GM12878 (cell line): ENCODE measurements at regions of chr4 and their contacts with region 1.

Region 1: DNA sequence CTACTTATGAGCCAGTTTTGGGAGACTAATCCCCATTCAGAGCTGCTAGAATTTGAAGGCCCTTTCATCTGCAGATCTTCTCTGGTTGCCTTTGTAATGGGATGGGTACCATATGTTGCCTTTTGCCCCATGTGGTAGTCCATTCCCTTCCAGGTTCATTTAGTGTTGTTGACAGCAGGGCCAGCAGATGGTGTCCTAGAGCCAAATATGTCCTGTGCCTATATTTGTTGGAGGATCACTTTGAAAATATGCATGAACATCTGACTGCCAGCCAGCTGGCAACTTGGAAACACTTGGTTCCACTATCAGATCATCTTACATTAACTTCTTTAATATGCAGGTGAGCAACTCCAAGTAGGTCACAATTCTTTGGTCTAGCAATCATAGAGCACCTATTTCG is 30.4 kb downstream of the CFAP299 start:
- DNase-seq: peak; percentile 26
- ATAC-seq: peak; percentile 91
- H3K4me3 ChIP-seq: no peak overlapping the region
- H3K27ac ChIP-seq: no peak overlapping the region
- H3K4me1 ChIP-seq: no peaks in the 10 kb centered on the region
- H3K27me3 ChIP-seq: no peaks in the 10 kb centered on the region
- CTCF ChIP-seq: peak; percentile 62 to 73 (median 67)
- EP300 ChIP-seq: no peak
- POLR2A ChIP-seq: no peak
- RAD21 ChIP-seq: peak; percentile 85

Region 2: DNA sequence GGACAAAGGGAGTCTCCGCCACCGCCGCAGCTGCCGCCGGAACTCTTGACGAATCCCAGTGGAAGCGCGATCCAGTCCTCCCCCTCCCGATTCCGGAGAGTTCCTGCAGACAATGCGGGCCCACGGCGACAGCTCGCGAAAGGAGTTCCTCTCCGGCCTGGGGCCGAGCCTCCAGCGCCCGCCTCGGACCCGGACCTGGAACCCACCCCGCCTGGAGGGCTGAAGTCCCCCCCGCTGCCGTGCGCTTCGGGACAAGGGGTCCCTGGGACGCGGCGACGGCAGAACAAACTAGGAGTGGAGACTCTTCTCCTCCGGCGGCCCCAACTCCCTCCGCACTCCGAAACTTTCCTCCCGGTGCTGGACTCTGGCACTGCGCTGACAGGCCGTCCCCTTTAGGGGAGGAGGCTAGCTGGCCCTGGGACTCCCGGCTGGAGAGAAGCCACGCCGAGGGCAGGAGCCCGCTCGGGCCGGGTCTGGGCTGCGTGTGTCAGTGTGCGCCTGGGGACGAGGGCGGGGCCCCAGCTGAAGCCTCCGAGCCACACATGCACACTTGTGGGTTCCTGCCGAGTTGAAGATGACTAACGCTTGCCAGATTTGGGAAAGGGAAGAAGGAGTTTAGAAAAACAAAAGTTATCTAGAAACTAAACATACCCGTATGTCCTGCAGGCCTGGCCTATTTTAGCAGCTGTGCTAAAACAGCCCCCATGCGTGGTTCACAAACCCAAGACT is 293.0 kb before region 1 on chr4 and contains the start of gene ANTXR2:
- CTCF ChIA-PET with region 1: no interaction called
- POLR2A ChIA-PET with region 1: no interaction called
- RAD21 ChIA-PET with region 1: no interaction called
- SMC1A ChIA-PET with region 1: no interaction called
- in situ Hi-C with region 1: no loop called
- intact Hi-C with region 1: no loop called
- DNase-seq: peak; percentile 41
- ATAC-seq: peak; percentile 81
- H3K4me3 ChIP-seq: peak within 1 kb of the TSS; percentile 95
- H3K27ac ChIP-seq: peak within 1 kb of the TSS; percentile 70
- H3K4me1 ChIP-seq: peaks cover 48% of the 10 kb centered on the region
- H3K27me3 ChIP-seq: no peaks in the 10 kb centered on the region
- CTCF ChIP-seq: no peak
- EP300 ChIP-seq: 0 out of 4 replicates have a peak, but pooled peaks of 1 of the 2 experiments have one; percentile 7
- POLR2A ChIP-seq: peak; percentile 69
- RAD21 ChIP-seq: no peak
- polyA plus RNA-seq, gene ANTXR2: 1.4 to 1.5 TPM

Region 3: GRCh38 chr4:80221161-80221560 is 144.8 kb before region 1 on chr4:
- CTCF ChIA-PET with region 1: interaction called, 6 read pairs
- POLR2A ChIA-PET with region 1: no interaction called
- RAD21 ChIA-PET with region 1: interaction called, 5 read pairs
- SMC1A ChIA-PET with region 1: interaction called, 13 read pairs
- in situ Hi-C with region 1: no loop called
- intact Hi-C with region 1: loop called (anchors 1 kb)
- DNase-seq: no peak
- ATAC-seq: peak; percentile 55
- H3K4me3 ChIP-seq: no peak overlapping the region
- H3K27ac ChIP-seq: no peak overlapping the region
- H3K4me1 ChIP-seq: no peaks in the 10 kb centered on the region
- H3K27me3 ChIP-seq: peaks cover 0 to 8% of the 10 kb centered on the region in 2 experiments; a peak in 2 of 4 replicates
- CTCF ChIP-seq: peak in 2 of 3 experiments; percentile 14 to 25; a peak in 4 of 6 replicates
- EP300 ChIP-seq: no peak
- POLR2A ChIP-seq: no peak
- RAD21 ChIP-seq: peak; percentile 52

Region 4: DNA sequence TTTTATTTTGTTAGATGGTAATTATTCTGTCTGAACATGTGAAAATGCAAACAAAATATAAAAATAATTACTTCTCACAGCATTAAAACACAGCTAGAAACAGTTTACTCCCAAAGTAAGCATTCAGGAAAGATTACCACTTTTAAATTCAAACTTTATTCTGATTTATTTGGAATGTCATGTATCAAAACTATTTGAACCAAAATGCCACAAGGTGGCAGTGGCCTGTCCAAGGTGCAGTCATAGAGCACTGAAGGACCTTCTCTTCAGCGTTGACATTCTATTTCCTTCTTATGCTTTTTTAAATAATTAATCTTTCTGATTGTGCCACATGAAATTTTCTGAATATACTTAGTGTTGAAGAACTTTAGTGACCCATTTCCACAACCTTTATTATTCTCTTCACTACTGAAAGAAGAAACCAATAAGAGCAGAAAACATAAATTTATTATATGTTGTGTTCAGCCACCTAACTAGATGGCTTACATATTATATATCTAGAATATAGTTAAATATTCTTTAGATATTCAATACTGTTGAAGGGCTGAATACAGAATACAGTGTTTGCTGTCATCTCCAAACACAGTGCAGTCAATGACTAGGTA is 253.2 kb after region 1 on chr4:
- CTCF ChIA-PET with region 1: interaction called, 3 read pairs
- POLR2A ChIA-PET with region 1: no interaction called
- RAD21 ChIA-PET with region 1: interaction called, 4 read pairs
- SMC1A ChIA-PET with region 1: no interaction called
- in situ Hi-C with region 1: no loop called
- intact Hi-C with region 1: loop called (anchors 2 kb)
- DNase-seq: no peak
- ATAC-seq: peak; percentile 48; the same call in 2 of the 3 replicates
- H3K4me3 ChIP-seq: no peak overlapping the region
- H3K27ac ChIP-seq: no peak overlapping the region
- H3K4me1 ChIP-seq: no peaks in the 10 kb centered on the region
- H3K27me3 ChIP-seq: no peaks in the 10 kb centered on the region
- CTCF ChIP-seq: peak in 2 of 3 experiments; percentile 14 to 42; a peak in 3 of 6 replicates
- EP300 ChIP-seq: no peak
- POLR2A ChIP-seq: no peak
- RAD21 ChIP-seq: peak; percentile 52

Region 5: GRCh38 chr4:80989921-80990544 is 624.1 kb after region 1 on chr4:
- CTCF ChIA-PET with region 1: interaction called, 26 read pairs
- POLR2A ChIA-PET with region 1: no interaction called
- RAD21 ChIA-PET with region 1: interaction called, 7 read pairs
- SMC1A ChIA-PET with region 1: interaction called, 11 read pairs
- in situ Hi-C with region 1: no loop called
- intact Hi-C with region 1: loop called (anchors 1 kb)
- DNase-seq: peak; percentile 26
- ATAC-seq: peak; percentile 85
- H3K4me3 ChIP-seq: no peak overlapping the region
- H3K27ac ChIP-seq: no peak overlapping the region
- H3K4me1 ChIP-seq: no peaks in the 10 kb centered on the region
- H3K27me3 ChIP-seq: no peaks in the 10 kb centered on the region
- CTCF ChIP-seq: peak; percentile 58 to 68 (median 61)
- EP300 ChIP-seq: no peak
- POLR2A ChIP-seq: no peak
- RAD21 ChIP-seq: peak; percentile 80

Region 6: GRCh38 chr4:81040012-81040659 is 674.2 kb after region 1 on chr4:
- CTCF ChIA-PET with region 1: interaction called, 268 read pairs
- POLR2A ChIA-PET with region 1: interaction called, 3 read pairs
- RAD21 ChIA-PET with region 1: interaction called, 78 read pairs
- SMC1A ChIA-PET with region 1: interaction called, 56 read pairs
- in situ Hi-C with region 1: loop called (anchors 5 kb)
- intact Hi-C with region 1: loop called (anchors 1 kb)
- DNase-seq: no peak
- ATAC-seq: peak; percentile 82
- H3K4me3 ChIP-seq: no peak overlapping the region
- H3K27ac ChIP-seq: no peak overlapping the region
- H3K4me1 ChIP-seq: 0 out of 2 replicates have a peak, but pooled peaks cover 3% of the 10 kb centered on the region
- H3K27me3 ChIP-seq: no peaks in the 10 kb centered on the region
- CTCF ChIP-seq: peak; percentile 59 to 81 (median 68); a peak in 5 of 6 replicates
- EP300 ChIP-seq: no peak
- POLR2A ChIP-seq: no peak
- RAD21 ChIP-seq: peak; percentile 92

Region 7: GRCh38 chr4:81069706-81070331 is 703.9 kb after region 1 on chr4:
- CTCF ChIA-PET with region 1: interaction called, 34 read pairs
- POLR2A ChIA-PET with region 1: no interaction called
- RAD21 ChIA-PET with region 1: interaction called, 17 read pairs
- SMC1A ChIA-PET with region 1: interaction called, 10 read pairs
- in situ Hi-C with region 1: no loop called
- intact Hi-C with region 1: loop called (anchors 1 kb)
- DNase-seq: peak; percentile 32
- ATAC-seq: peak; percentile 96
- H3K4me3 ChIP-seq: no peak overlapping the region
- H3K27ac ChIP-seq: no peak overlapping the region
- H3K4me1 ChIP-seq: no peaks in the 10 kb centered on the region
- H3K27me3 ChIP-seq: 0 out of 4 replicates have a peak, but pooled peaks cover 0 to 2% of the 10 kb centered on the region in 2 experiments
- CTCF ChIP-seq: peak; percentile 80 to 93 (median 93)
- EP300 ChIP-seq: no peak
- POLR2A ChIP-seq: no peak
- RAD21 ChIP-seq: peak; percentile 80

Region 8: GRCh38 chr4:81351654-81352445 is 985.9 kb after region 1 on chr4:
- CTCF ChIA-PET with region 1: interaction called, 21 read pairs
- POLR2A ChIA-PET with region 1: no interaction called
- RAD21 ChIA-PET with region 1: interaction called, 17 read pairs
- SMC1A ChIA-PET with region 1: interaction called, 9 read pairs
- in situ Hi-C with region 1: loop called (anchors 5 kb)
- intact Hi-C with region 1: loop called (anchors 1 kb)
- DNase-seq: peak; percentile 8
- ATAC-seq: peak; percentile 93
- H3K4me3 ChIP-seq: no peak overlapping the region
- H3K27ac ChIP-seq: no peak overlapping the region
- H3K4me1 ChIP-seq: no peaks in the 10 kb centered on the region
- H3K27me3 ChIP-seq: no peaks in the 10 kb centered on the region
- CTCF ChIP-seq: peak; percentile 84 to 95 (median 85)
- EP300 ChIP-seq: no peak
- POLR2A ChIP-seq: no peak
- RAD21 ChIP-seq: peak; percentile 82